Gastrocnemius medialis (tissue), 4 donors: ENCODE measurements at regions of chr22 and their contacts with region 1.

Region 1: DNA sequence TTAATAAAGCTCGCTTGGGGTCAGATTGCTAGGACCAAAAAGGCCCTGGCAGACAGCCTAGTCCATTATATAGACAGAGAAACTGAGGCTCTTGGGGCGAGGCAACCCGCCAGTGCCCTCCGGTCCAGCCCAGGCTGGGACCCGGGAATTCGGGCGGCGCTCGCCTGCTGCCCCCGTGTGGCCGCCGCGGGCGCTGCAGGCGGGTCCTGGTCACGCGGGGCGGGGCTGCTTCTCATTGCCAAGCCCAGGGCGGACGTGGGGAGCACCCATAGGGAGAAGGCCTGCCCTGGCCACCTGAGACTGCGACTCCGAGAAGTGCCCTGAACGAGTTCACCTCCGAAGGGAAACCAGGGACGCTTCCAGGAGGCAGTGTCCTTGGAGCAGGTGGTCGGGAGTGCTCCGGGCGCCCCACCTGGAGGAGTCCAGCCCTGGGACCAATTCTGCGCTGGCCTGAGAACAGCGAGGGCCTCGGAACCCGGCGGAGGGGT is 36.0 kb upstream of the CSNK1E start:
- DNase-seq: peak; percentile 30 to 55
- ATAC-seq: peak; percentile 63 to 85
- H3K4me3 ChIP-seq: no peak overlapping the region
- H3K27ac ChIP-seq: peak overlapping the region in 2 of 4 donors; percentile 16 to 44
- H3K4me1 ChIP-seq: peaks cover 0 to 12% of the 10 kb centered on the region in 2 donors
- H3K27me3 ChIP-seq: no peaks in the 10 kb centered on the region
- CTCF ChIP-seq: peak; percentile 96 to 99 (median 99)
- POLR2A ChIP-seq: no peak

Region 2: GRCh38 chr22:38040953-38041759 is 312.0 kb before region 1 on chr22:
- in situ Hi-C with region 1: loop called in 1 of 4 experiments (anchors 10 kb)
- intact Hi-C with region 1: no loop called
- DNase-seq: no peak
- ATAC-seq: no peak
- H3K4me3 ChIP-seq: no peak overlapping the region
- H3K27ac ChIP-seq: no peak overlapping the region
- H3K4me1 ChIP-seq: peaks cover 0 to 11% of the 10 kb centered on the region in 2 donors
- H3K27me3 ChIP-seq: no peaks in the 10 kb centered on the region
- CTCF ChIP-seq: no peak
- POLR2A ChIP-seq: no peak

Region 3: DNA sequence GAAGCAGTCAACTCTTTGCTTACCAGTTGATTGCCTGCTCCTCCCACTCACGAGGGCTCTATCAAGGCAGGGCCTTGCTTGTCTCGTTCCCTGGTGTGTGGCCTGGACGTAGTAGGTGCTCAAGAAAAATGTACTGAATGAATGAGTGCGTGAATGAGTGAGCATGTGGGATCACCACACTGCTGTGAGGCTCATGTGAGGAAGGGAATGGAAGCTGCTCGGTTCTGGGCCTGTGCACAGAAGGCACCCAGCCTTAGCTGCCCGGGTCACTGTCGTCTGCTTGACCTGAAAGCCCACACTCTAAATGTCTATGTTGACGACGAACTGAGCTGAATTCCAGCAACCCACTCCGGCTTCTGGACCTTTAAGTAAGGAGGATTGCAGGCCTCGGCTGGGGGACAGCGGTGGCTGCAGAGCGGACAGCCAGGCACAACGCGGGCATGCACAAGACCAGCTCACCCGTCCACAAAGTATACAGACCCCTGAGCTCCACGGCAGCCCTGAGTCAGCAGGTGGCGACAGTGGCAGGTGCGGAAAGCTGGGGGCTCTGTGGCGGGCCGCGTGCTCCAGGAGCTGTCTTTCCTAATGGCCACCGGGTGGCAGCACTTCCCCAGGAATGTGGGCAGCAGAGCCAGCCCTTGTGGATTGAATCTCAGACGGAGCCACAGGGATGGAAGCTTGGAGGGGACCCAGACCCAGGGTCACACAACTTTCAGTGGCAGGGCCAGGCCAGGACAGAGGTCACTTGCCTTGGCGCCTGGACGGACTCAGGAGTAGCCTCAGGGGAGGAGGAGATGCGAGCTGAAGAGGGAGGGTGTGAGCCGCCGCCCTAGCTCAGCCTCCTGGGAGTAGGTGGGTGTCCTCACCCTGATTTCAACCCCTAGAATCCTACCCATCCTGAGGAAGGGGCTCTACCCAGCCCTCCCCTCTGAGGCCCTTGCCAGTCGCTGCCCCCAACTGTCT is 301.0 kb before region 1 on chr22:
- in situ Hi-C with region 1: loop called in 1 of 4 experiments (anchors 10 kb)
- intact Hi-C with region 1: loop called (anchors 1 kb)
- DNase-seq: peak; percentile 57 to 81
- ATAC-seq: peak; percentile 71 to 72
- H3K4me3 ChIP-seq: no peak overlapping the region
- H3K27ac ChIP-seq: no peak overlapping the region
- H3K4me1 ChIP-seq: peaks cover 5 to 7% of the 10 kb centered on the region in 2 donors
- H3K27me3 ChIP-seq: no peaks in the 10 kb centered on the region
- CTCF ChIP-seq: peak; percentile 88 to 96 (median 93)
- POLR2A ChIP-seq: no peak

Region 4: GRCh38 chr22:38114484-38115398 is 238.4 kb before region 1 on chr22:
- in situ Hi-C with region 1: loop called (anchors 10 to 25 kb)
- intact Hi-C with region 1: loop called (anchors 5 kb)
- DNase-seq: peak; percentile 61 to 78
- ATAC-seq: peak; percentile 83 to 90
- H3K4me3 ChIP-seq: no peak overlapping the region
- H3K27ac ChIP-seq: no peak overlapping the region
- H3K4me1 ChIP-seq: peaks cover 2 to 7% of the 10 kb centered on the region in 2 donors
- H3K27me3 ChIP-seq: no peaks in the 10 kb centered on the region
- CTCF ChIP-seq: peak; percentile 75 to 96 (median 91)
- POLR2A ChIP-seq: no peak

Region 5: GRCh38 chr22:38262051-38262795 is 91.0 kb before region 1 on chr22:
- in situ Hi-C with region 1: loop called in 3 of 4 experiments (anchors 5 to 25 kb)
- intact Hi-C with region 1: loop called (anchors 2 kb)
- DNase-seq: peak in 1 of 2 donors; percentile 61
- ATAC-seq: peak; percentile 25 to 79
- H3K4me3 ChIP-seq: no peak overlapping the region
- H3K27ac ChIP-seq: peak overlapping the region; percentile 51 to 79 (median 77)
- H3K4me1 ChIP-seq: peaks cover 73 to 79% of the 10 kb centered on the region in 2 donors
- H3K27me3 ChIP-seq: no peaks in the 10 kb centered on the region
- CTCF ChIP-seq: peak; percentile 57 to 72 (median 64)
- POLR2A ChIP-seq: no peak

Region 6: GRCh38 chr22:38272373-38273134 is 80.6 kb before region 1 on chr22 and contains the start of gene TMEM184B:
- in situ Hi-C with region 1: loop called in 2 of 4 experiments (anchors 10 to 25 kb)
- intact Hi-C with region 1: no loop called
- DNase-seq: peak; percentile 33 to 72
- ATAC-seq: peak; percentile 91 to 94
- H3K4me3 ChIP-seq: peak within 1 kb of the TSS; percentile 75 to 99 (median 86)
- H3K27ac ChIP-seq: peak within 1 kb of the TSS; percentile 91 to 96 (median 96)
- H3K4me1 ChIP-seq: peaks cover 57 to 59% of the 10 kb centered on the region in 2 donors
- H3K27me3 ChIP-seq: no peaks in the 10 kb centered on the region
- CTCF ChIP-seq: no peak
- POLR2A ChIP-seq: peak; percentile 98 to 99
- total RNA-seq, gene TMEM184B: 25.4 to 40.7 (median 31.2) TPM

Region 7: GRCh38 chr22:38298312-38299000 is 54.7 kb before region 1 on chr22:
- in situ Hi-C with region 1: no loop called
- intact Hi-C with region 1: loop called (anchors 5 kb)
- DNase-seq: no peak
- ATAC-seq: no peak
- H3K4me3 ChIP-seq: no peak overlapping the region
- H3K27ac ChIP-seq: peak overlapping the region in 1 of 4 donors; percentile 7
- H3K4me1 ChIP-seq: peaks cover 24 to 27% of the 10 kb centered on the region in 2 donors
- H3K27me3 ChIP-seq: no peaks in the 10 kb centered on the region
- CTCF ChIP-seq: peak in 3 of 5 experiments; percentile 21 to 44 (median 44)
- POLR2A ChIP-seq: no peak

Region 8: DNA sequence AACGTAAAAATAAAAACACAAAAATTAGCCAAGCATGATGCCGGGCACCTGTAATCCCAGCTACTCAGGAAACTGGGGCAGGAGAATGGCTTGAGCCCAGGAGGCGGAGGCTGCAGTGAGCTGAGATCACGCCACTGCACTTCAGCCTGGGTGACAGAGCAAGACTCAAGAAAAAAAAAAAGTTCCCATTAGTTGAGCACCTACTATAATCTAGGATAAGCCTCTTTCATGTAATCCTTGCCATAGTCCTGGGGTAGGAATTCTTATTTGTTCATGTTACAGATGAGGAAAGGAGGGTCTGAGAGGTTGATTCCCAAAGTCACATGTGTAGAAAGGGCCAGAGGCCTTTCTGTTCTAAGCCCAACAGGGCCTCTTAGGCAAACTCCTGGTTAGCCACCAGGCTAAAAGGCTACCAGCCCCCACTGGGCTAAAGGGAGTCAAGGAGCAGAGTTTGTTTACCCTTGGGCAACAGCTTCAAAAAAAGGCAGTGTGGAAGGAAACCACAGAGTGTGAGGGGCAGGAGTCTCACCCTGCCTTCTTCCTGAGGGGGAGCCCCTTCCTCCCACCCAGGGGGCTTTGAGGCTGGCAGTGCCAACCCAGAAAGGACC is 14.3 kb before region 1 on chr22:
- in situ Hi-C with region 1: no loop called
- intact Hi-C with region 1: no loop called
- DNase-seq: no peak
- ATAC-seq: no peak
- H3K4me3 ChIP-seq: no peak overlapping the region
- H3K27ac ChIP-seq: no peak overlapping the region
- H3K4me1 ChIP-seq: peaks cover 0 to 7% of the 10 kb centered on the region in 2 donors
- H3K27me3 ChIP-seq: peaks cover 0 to 16% (median 11%) of the 10 kb centered on the region in 3 donors
- CTCF ChIP-seq: no peak
- POLR2A ChIP-seq: no peak